HepG2 (cell line): ENCODE measurements at regions of chr1 and their contacts with region 1.

Region 1: DNA sequence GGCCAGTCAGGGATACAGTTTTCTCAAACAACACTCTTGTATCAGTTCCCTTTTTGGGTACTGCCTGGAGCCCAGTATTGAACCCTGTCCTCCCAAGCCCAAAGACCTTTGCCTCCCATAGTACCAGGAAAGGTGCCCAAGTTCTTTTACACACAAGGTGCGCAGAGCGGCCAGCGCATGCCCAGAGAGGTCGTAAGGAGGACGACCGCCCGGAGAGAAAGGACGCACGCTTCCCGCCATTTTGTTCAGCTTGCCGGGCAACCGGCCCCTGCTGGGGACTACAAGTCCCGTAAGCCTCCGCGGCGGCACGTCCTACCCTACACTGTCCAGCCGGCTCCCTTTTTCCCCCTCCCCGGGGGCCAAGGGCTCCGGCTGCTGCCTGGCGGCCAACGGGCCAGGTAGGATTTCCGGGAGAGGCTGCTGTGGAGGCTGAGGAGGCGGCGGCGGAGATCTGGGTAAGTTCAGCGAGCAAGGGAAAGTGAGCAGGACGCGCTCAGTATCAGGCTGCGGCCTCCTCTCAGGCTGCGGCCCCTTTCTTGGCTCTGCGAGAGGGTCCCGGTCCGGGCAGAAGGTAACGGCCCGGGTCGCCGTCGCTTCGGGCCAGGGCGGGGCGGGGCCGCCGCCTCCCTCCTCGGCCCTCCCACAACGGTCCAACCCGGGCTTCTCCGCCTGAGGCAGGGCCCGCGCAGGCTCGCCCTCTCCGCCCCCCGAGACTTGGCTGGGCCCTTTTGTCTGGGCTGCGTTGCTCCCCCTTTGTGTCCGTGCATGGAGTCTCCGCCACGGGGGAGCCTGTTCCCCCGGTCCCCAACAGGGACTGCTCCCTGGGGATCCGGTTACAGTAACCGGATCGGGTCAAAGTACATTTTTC is at the start of gene PHACTR4:
- DNase-seq: peak; percentile 92
- ATAC-seq: peak; percentile 96
- H3K4me3 ChIP-seq: peak within 1 kb of the TSS; percentile 70 to 86 (median 86)
- H3K27ac ChIP-seq: peak within 1 kb of the TSS; percentile 99
- H3K4me1 ChIP-seq: peaks cover 51% of the 10 kb centered on the region
- H3K27me3 ChIP-seq: no peaks in the 10 kb centered on the region
- CTCF ChIP-seq: no peak; the same call in none of the 2 replicates
- EP300 ChIP-seq: no peak; a peak in 1 of 4 replicates
- POLR2A ChIP-seq: peak; percentile 72 to 93
- RAD21 ChIP-seq: peak; percentile 47; the same call in 1 of the 2 replicates
- total RNA-seq, gene PHACTR4: 17.1 and 29.6 TPM in 2 replicates

Region 2: GRCh38 chr1:28235755-28236655 is 133.6 kb before region 1 on chr1 and contains the start of gene ATP5IF1:
- CTCF ChIA-PET with region 1: no interaction called
- POLR2A ChIA-PET with region 1: interaction called, 16 read pairs
- in situ Hi-C with region 1: no loop called
- intact Hi-C with region 1: no loop called
- DNase-seq: peak; percentile 96
- ATAC-seq: peak; percentile 96
- H3K4me3 ChIP-seq: peak within 1 kb of the TSS; percentile 82 to 95 (median 93)
- H3K27ac ChIP-seq: peak within 1 kb of the TSS; percentile 91
- H3K4me1 ChIP-seq: peaks cover 40% of the 10 kb centered on the region
- H3K27me3 ChIP-seq: peaks cover 0 to 2% of the 10 kb centered on the region in 2 experiments; a peak in 1 of 5 replicates
- CTCF ChIP-seq: no peak; the same call in 1 of the 2 replicates
- EP300 ChIP-seq: no peak
- POLR2A ChIP-seq: peak; percentile 95 to 99
- RAD21 ChIP-seq: no peak; the same call in 1 of the 2 replicates
- total RNA-seq, gene ATP5IF1: 131 and 143 TPM in 2 replicates